ENCODE measurements at regions of chr7 and their contacts with region 1.

Region 1: GRCh38 chr7:97872025-97872669 is at the start of gene ASNS:
- DNase-seq: peak; percentile 62 to 93 (median 74)
- ATAC-seq: peak; percentile 82
- H3K4me3 ChIP-seq: peak within 1 kb of the TSS; percentile 77
- H3K4me3 Mint-ChIP-seq: peak within 1 kb of the TSS; percentile 91
- H3K27ac ChIP-seq: peak within 1 kb of the TSS; percentile 64 to 77
- H3K27ac Mint-ChIP-seq: peak within 1 kb of the TSS; percentile 81
- H3K4me1 ChIP-seq: peaks cover 19% of the 10 kb centered on the region
- H3K4me1 Mint-ChIP-seq: peaks cover 27% of the 10 kb centered on the region
- H3K27me3 ChIP-seq: no peaks in the 10 kb centered on the region
- H3K27me3 Mint-ChIP-seq: no peaks in the 10 kb centered on the region
- CTCF ChIP-seq: no peak
- total RNA-seq, gene ASNS: 18.3 to 19.5 TPM

Region 2: GRCh38 chr7:96926805-96927530 is 945.2 kb before region 1 on chr7:
- CTCF ChIA-PET with region 1: no interaction called
- POLR2A ChIA-PET with region 1: no interaction called
- intact Hi-C with region 1: no loop called
- DNase-seq: no peak
- ATAC-seq: no peak
- H3K4me3 ChIP-seq: no peak overlapping the region
- H3K4me3 Mint-ChIP-seq: no peak overlapping the region
- H3K27ac ChIP-seq: no peak overlapping the region
- H3K27ac Mint-ChIP-seq: no peak overlapping the region
- H3K4me1 ChIP-seq: no peaks in the 10 kb centered on the region
- H3K4me1 Mint-ChIP-seq: no peaks in the 10 kb centered on the region
- H3K27me3 ChIP-seq: peaks cover 0 to 7% of the 10 kb centered on the region in 2 experiments
- H3K27me3 Mint-ChIP-seq: peaks cover 14% of the 10 kb centered on the region
- CTCF ChIP-seq: no peak

Region 3: DNA sequence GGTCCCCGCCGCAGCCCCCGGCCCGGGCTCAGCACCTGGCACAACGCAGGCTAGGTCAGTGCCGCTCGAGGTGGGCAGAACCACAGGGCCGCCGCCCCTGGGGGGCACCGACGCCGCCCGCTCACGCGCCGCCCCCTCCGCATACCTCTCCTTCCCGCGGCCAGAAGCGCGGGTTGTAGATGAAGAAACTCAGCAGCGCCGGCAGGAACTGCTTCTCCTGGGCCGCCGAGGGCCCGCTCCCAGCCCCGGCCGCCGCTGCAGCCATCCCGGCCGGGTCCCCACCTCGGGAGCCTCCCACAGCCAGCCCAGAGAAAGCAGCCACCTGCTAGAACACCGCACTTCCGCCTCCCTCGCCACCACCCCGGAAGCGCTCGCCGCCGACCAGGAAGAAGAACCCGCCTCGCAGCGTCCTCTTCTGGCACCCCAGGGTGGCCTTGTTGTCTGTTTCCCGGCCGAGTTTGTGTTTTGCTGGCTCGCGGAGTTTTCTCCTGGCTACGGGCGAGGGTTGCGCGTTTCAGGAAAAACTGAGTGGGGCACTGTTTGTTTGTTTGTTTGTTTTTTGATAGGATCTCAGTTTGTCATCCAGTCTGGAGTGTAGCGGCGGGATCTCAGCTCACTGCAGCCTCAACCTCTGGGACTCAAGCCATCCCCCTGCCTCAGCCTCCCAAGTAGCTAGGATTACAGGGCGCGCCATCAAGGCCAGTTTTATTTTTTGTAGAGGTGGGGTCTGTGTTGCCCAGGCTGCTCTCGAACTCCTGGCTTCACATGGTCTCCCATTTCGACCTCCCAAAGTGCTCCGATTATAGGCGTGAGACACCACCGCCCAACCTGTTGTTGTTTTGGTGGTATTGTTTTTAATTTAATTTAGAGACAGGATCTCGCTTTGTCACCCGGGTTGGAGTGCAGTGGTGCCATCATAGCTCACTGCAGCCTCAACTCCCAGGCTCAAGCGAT is 100.1 kb after region 1 on chr7:
- CTCF ChIA-PET with region 1: no interaction called
- POLR2A ChIA-PET with region 1: interaction called, 5 read pairs
- intact Hi-C with region 1: loop called in 1 of 2 experiments (anchors 2 kb)
- DNase-seq: peak; percentile 71 to 91 (median 80)
- ATAC-seq: peak; percentile 93
- H3K4me3 ChIP-seq: peak overlapping the region; percentile 85
- H3K4me3 Mint-ChIP-seq: peak overlapping the region; percentile 96
- H3K27ac ChIP-seq: peak overlapping the region; percentile 76 to 79
- H3K27ac Mint-ChIP-seq: peak overlapping the region; percentile 93
- H3K4me1 ChIP-seq: peaks cover 17% of the 10 kb centered on the region
- H3K4me1 Mint-ChIP-seq: peaks cover 18% of the 10 kb centered on the region
- H3K27me3 ChIP-seq: no peaks in the 10 kb centered on the region
- H3K27me3 Mint-ChIP-seq: no peaks in the 10 kb centered on the region
- CTCF ChIP-seq: peak; percentile 28